ENCODE measurements at regions of chrX and their contacts with region 1.

Region 1: DNA sequence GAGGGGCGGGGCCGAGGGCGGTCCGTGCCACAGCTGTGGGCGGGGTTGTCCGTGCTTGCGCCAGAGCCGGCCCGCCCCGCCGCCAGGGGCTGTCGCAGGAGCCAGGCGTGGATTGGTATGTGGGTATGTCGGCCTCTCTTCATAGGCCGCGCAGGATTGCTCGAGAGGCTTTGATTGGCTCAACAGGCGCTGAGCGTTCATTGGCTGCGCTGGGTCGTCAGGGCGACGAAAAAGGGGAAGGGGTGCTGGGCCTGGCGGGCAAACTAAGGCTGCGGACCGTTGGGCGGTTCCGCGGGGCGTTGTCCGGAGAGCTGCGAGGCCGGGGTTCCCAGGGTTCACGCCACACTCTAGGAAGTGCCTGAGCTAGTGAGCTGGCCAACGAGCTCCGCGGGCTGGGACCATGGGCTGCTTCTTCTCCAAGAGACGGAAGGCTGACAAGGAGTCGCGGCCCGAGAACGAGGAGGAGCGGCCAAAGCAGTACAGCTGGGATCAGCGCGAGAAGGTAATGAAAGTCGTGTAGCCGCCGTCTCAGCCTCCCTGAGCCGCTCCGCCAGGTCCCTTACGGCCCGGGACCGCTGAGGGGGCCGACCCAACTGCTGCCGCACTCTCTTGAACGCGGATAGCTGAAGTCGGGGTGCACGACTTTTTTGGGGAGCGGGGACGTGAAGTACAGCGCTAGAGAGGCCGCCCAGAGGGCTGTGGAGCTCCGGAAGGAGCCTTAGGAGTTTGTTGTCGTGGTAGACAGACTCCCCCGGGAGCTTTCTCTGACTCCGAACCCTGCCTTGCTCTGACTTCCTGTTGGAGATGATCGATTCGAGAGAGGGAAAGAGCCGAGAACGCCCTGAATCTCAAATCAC is at the start of gene RP2:
- DNase-seq: peak; percentile 89
- H3K4me3 Mint-ChIP-seq: peak within 1 kb of the TSS; percentile 91
- H3K27ac Mint-ChIP-seq: peak within 1 kb of the TSS; percentile 84
- H3K4me1 Mint-ChIP-seq: peaks cover 2% of the 10 kb centered on the region
- H3K27me3 Mint-ChIP-seq: no peaks in the 10 kb centered on the region
- total RNA-seq, gene RP2: 4.0 to 4.2 TPM

Region 2: GRCh38 chrX:46545111-46546005 is 291.6 kb before region 1 on chrX and contains the start of gene ZNF674:
- CTCF ChIA-PET with region 1: no interaction called
- intact Hi-C with region 1: loop called (anchors 1 kb)
- DNase-seq: peak; percentile 94
- H3K4me3 Mint-ChIP-seq: peak within 1 kb of the TSS; percentile 95
- H3K27ac Mint-ChIP-seq: peak within 1 kb of the TSS; percentile 98
- H3K4me1 Mint-ChIP-seq: peaks cover 30% of the 10 kb centered on the region
- H3K27me3 Mint-ChIP-seq: no peaks in the 10 kb centered on the region
- total RNA-seq, gene ZNF674: 0.94 to 1.9 TPM

Region 3: GRCh38 chrX:46823491-46823890 is 13.4 kb before region 1 on chrX:
- CTCF ChIA-PET with region 1: no interaction called
- intact Hi-C with region 1: no loop called
- DNase-seq: no peak
- H3K4me3 Mint-ChIP-seq: no peak overlapping the region
- H3K27ac Mint-ChIP-seq: no peak overlapping the region
- H3K4me1 Mint-ChIP-seq: no peaks in the 10 kb centered on the region
- H3K27me3 Mint-ChIP-seq: no peaks in the 10 kb centered on the region

Region 4: GRCh38 chrX:46912098-46912602 is 75.2 kb after region 1 on chrX and contains the start of gene JADE3:
- CTCF ChIA-PET with region 1: interaction called, 3 read pairs
- intact Hi-C with region 1: loop called (anchors 5 kb)
- DNase-seq: peak; percentile 23
- H3K4me3 Mint-ChIP-seq: peak within 1 kb of the TSS; percentile 73
- H3K27ac Mint-ChIP-seq: no peak within 1 kb of the TSS
- H3K4me1 Mint-ChIP-seq: peaks cover 12% of the 10 kb centered on the region
- H3K27me3 Mint-ChIP-seq: peaks cover 32% of the 10 kb centered on the region
- total RNA-seq, gene JADE3: 1.4 TPM

Region 5: GRCh38 chrX:46929439-46930261 is 92.7 kb after region 1 on chrX:
- CTCF ChIA-PET with region 1: no interaction called
- intact Hi-C with region 1: no loop called
- DNase-seq: no peak
- H3K4me3 Mint-ChIP-seq: no peak overlapping the region
- H3K27ac Mint-ChIP-seq: no peak overlapping the region
- H3K4me1 Mint-ChIP-seq: no peaks in the 10 kb centered on the region
- H3K27me3 Mint-ChIP-seq: no peaks in the 10 kb centered on the region

Measured in activated naive CD4-positive, alpha-beta T cell treated with anti-CD3 and anti-CD28 coated beads for 36 hours (primary cell).